ENCODE measurements at regions of chr13 and their contacts with region 1.

Region 1: DNA sequence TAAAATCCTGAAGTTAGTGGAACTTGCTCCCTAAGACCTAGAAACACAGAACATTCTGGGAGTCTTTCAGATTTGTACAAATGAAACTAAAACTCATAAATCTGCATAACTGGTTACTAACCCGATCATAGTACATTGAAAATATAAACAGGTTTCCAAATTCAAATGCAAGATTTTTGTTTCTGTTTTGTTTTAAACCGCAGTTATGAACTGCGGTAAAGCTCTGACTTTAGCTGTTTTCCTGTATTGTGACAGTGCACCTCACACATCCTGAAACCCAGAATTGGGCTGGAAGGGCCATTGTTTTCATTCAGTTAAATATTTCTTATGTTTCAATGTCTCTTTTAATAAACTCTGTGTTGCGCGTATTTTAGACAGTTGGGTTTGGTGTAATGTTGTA is 204.7 kb downstream of the SHISA2 start:
- DNase-seq: peak; percentile 80
- H3K4me3 Mint-ChIP-seq: peak overlapping the region; percentile 31
- H3K27ac Mint-ChIP-seq: peak overlapping the region; percentile 49
- H3K4me1 Mint-ChIP-seq: peaks cover 41% of the 10 kb centered on the region
- H3K27me3 Mint-ChIP-seq: peaks cover 2% of the 10 kb centered on the region

Region 2: GRCh38 chr13:25762795-25763377 is 84.3 kb before region 1 on chr13:
- intact Hi-C with region 1: loop called (anchors 5 kb)
- DNase-seq: peak; percentile 78
- H3K4me3 Mint-ChIP-seq: peak overlapping the region; percentile 57
- H3K27ac Mint-ChIP-seq: peak overlapping the region; percentile 79
- H3K4me1 Mint-ChIP-seq: peaks cover 29% of the 10 kb centered on the region
- H3K27me3 Mint-ChIP-seq: peaks cover 2% of the 10 kb centered on the region

Region 3: GRCh38 chr13:25806264-25806974 is 40.7 kb before region 1 on chr13:
- intact Hi-C with region 1: loop called (anchors 1 kb)
- DNase-seq: peak; percentile 72
- H3K4me3 Mint-ChIP-seq: no peak overlapping the region
- H3K27ac Mint-ChIP-seq: peak overlapping the region; percentile 73
- H3K4me1 Mint-ChIP-seq: peaks cover 16% of the 10 kb centered on the region
- H3K27me3 Mint-ChIP-seq: no peaks in the 10 kb centered on the region

Region 4: DNA sequence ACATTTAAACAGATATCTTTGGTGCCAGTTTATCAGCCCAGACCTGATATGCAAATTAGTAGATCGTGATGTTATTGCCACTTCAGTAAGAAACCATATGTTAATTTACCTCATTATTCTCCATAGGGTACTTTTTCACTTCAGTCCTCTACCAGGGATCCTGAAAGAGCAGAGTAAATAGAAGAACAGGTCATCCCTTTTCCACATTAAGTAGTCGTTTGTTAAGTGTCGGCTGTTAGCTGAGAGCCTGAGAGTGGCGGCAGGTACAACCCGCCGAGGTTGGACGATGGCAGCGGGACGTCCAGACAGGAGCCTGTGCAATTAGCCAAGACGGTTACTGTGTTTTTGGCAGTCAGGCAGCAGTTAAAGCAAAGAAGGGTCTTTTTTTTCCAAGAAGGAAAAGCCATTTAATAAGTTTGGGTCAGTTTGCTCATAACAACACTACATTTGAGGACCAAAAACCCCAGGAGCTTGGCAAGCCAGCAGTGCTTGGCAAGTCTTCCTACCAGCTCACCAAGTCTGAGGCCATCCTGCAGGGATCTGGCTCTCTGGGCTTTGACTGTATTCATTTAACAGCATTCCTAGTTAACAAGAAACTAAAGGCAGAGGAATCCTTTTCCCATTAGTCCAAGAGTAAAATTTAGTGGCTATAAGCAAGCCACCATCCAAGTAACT is 27.2 kb before region 1 on chr13:
- intact Hi-C with region 1: no loop called
- DNase-seq: no peak
- H3K4me3 Mint-ChIP-seq: no peak overlapping the region
- H3K27ac Mint-ChIP-seq: no peak overlapping the region
- H3K4me1 Mint-ChIP-seq: peaks cover 2% of the 10 kb centered on the region
- H3K27me3 Mint-ChIP-seq: peaks cover 5% of the 10 kb centered on the region

Region 5: GRCh38 chr13:25874907-25875306 is 27.8 kb after region 1 on chr13:
- intact Hi-C with region 1: loop called (anchors 1 kb)
- DNase-seq: peak; percentile 89
- H3K4me3 Mint-ChIP-seq: peak overlapping the region; percentile 54
- H3K27ac Mint-ChIP-seq: peak overlapping the region; percentile 17
- H3K4me1 Mint-ChIP-seq: peaks cover 62% of the 10 kb centered on the region
- H3K27me3 Mint-ChIP-seq: no peaks in the 10 kb centered on the region

Region 6: DNA sequence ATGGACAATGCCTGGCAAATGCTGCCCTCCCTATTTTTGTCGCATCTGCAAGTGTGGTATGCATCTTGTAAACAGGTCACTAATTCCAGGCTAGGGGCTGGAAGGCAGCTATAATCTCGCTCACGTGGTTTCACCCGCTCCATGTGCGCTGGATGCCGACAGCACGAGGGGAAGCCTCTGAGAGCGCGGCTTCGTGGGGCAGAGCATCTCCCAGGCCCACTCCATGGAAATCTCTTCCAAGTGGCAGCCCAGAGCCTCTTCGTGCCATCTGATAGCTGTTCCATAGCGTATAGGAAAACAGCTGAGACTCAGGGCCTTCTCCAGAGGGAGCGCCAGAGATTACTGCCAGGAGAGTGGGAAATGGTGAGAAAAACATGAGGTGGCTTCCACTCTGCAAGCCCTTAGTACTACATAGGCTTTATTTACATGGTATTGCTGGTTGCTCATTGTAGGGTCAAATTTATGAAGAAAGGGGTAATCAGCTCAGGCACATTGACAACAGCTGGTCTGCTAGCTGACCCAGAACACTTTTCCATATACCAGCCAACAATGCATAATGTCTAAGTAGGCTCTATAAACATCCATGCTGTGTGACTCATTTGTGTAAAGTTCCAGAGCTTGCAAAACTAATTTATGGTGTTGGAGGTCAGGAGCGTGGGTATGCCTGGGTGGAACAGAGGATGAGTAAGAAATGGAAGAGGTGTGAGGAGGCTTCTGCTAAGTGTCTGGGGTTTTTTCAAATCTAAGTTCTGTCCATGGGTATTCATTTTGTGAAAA is 39.5 kb after region 1 on chr13:
- intact Hi-C with region 1: loop called (anchors 1 kb)
- DNase-seq: no peak
- H3K4me3 Mint-ChIP-seq: no peak overlapping the region
- H3K27ac Mint-ChIP-seq: peak overlapping the region; percentile 35
- H3K4me1 Mint-ChIP-seq: peaks cover 41% of the 10 kb centered on the region
- H3K27me3 Mint-ChIP-seq: no peaks in the 10 kb centered on the region

Region 7: DNA sequence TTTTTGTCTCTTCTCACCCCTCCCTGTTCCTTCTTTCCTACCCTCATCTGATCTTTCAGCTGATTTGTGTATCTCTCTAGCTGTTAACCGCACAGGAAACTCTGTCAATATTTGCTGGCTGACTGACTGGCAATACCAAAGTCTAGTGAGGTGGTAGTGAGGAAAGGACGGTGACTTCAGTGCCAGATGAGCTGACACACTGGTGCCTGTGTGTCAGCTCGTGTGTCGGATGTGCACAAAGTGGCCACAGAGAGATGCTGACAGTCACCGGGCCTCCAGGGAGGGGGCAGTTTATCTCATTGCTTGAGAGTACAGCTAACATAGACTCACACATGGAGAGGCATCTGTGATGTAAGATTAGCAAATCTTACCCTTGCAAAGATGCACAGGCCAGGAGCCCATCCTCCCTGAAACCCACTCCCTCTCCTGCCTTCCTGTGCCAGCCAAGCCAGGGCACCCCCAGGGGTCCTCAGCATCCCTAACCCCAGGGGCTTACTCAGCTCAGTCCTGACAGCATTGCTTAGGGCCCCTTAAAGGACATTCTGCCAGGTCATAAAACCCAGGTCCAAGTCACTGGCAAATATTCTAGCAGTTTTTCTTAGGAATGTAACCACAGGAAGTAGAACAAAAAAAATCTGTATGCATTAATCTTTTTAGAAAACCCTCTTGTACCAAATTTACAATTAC is 124.5 kb after region 1 on chr13:
- intact Hi-C with region 1: loop called (anchors 5 kb)
- DNase-seq: peak; percentile 83
- H3K4me3 Mint-ChIP-seq: peak overlapping the region; percentile 36
- H3K27ac Mint-ChIP-seq: peak overlapping the region; percentile 51
- H3K4me1 Mint-ChIP-seq: peaks cover 43% of the 10 kb centered on the region
- H3K27me3 Mint-ChIP-seq: no peaks in the 10 kb centered on the region